Activated CD4-positive, alpha-beta memory T cell treated with anti-CD3 and anti-CD28 coated beads for 36 hours (primary cell): ENCODE measurements at regions of chr20 and their contacts with region 1.

Region 1: DNA sequence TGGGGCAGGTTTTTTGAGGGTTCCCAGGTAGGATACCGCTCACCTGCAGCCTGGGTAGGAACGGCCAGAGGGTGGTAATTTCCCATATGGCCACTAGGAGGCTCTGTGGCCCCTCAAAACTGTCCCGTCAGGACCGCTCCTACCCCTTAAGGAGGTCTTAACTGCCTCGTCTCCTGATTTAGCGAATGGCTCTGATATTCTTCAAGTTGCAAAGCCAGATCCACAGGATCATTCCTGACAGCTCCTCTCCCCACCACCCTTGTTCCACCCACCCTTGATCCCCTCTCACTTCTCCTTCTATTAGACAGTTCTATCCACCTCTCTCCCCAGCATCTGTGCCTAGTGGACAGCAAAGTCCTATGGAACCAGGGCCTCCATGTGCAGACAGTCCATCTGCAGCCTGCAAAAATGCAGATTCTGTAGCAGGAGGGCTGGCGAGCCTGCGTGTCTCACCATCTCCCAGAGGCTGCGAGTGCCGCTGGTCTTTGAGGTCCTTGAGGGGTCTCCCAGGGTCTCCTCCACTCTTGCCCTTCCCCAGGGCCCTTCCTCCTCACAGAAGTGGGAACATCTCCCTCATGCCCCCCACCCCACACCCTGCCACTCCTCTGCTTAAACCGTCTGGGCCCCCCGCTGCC is 34.3 kb upstream of the ZBP1 start:
- DNase-seq: peak; percentile 66
- H3K4me3 Mint-ChIP-seq: no peak overlapping the region
- H3K27ac Mint-ChIP-seq: no peak overlapping the region
- H3K4me1 Mint-ChIP-seq: peaks cover 11% of the 10 kb centered on the region
- H3K27me3 Mint-ChIP-seq: no peaks in the 10 kb centered on the region

Region 2: DNA sequence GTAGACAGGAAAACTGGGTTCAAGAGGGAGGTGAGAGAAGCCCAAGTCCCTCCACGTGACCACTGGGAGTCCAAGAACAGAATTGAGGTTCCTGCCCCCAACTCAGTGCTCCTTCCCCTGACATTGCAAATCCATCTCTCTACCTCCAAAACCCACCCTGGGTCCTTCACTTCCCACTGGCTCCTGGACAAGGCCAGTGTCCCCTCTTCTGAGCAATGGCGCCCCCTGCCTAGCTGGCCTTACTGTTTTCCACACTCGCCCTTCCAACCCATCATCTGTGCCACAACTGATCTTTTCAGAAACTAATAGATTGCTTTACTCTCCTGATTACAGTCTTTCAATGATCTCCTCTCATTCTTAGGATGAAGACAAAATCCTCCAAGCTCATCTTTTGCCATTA is 373.6 kb after region 1 on chr20:
- CTCF ChIA-PET with region 1: no interaction called
- POLR2A ChIA-PET with region 1: no interaction called
- intact Hi-C with region 1: loop called (anchors 5 kb)
- DNase-seq: peak; percentile 24
- H3K4me3 Mint-ChIP-seq: no peak overlapping the region
- H3K27ac Mint-ChIP-seq: no peak overlapping the region
- H3K4me1 Mint-ChIP-seq: no peaks in the 10 kb centered on the region
- H3K27me3 Mint-ChIP-seq: peaks cover 19% of the 10 kb centered on the region

Region 3: DNA sequence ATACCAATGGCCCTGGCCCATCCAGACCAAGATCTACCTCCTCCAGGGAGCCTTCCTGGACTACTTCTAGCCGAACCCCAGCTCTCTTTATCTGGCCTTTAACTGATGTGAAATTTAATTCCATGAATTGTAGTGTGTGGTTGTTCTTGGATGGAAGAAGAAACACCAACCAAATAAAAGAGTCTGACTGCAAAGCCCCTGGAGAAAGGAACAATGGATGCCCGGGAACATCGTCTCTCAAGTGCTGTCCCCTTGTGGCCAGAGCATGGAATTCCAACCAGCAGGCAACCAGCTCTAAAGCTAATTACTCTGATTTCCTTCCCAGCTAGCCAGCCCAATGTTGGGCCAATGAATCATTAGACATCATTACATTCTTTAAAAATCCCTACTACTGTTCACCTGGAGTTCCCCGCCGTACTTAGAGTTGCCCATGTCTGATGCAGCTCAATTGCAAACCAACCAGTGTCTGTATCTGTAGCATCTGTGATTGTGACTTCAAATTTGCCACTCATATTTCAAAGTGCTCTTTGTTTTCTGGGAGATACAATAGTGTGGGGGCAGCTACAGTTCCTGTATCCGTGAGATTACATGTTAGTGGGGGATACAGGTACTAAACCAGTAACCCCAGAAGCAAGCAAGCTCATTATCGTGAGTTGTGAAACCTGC is 432.8 kb after region 1 on chr20:
- CTCF ChIA-PET with region 1: interaction called, 44 read pairs
- POLR2A ChIA-PET with region 1: no interaction called
- intact Hi-C with region 1: loop called (anchors 5 kb)
- DNase-seq: peak; percentile 27
- H3K4me3 Mint-ChIP-seq: no peak overlapping the region
- H3K27ac Mint-ChIP-seq: no peak overlapping the region
- H3K4me1 Mint-ChIP-seq: no peaks in the 10 kb centered on the region
- H3K27me3 Mint-ChIP-seq: peaks cover 9% of the 10 kb centered on the region

Region 4: GRCh38 chr20:58179432-58180099 is 525.1 kb after region 1 on chr20:
- CTCF ChIA-PET with region 1: interaction called, 11 read pairs
- POLR2A ChIA-PET with region 1: no interaction called
- intact Hi-C with region 1: loop called (anchors 1 kb)
- DNase-seq: peak; percentile 70
- H3K4me3 Mint-ChIP-seq: no peak overlapping the region
- H3K27ac Mint-ChIP-seq: no peak overlapping the region
- H3K4me1 Mint-ChIP-seq: peaks cover 3% of the 10 kb centered on the region
- H3K27me3 Mint-ChIP-seq: peaks cover 13% of the 10 kb centered on the region

Region 5: DNA sequence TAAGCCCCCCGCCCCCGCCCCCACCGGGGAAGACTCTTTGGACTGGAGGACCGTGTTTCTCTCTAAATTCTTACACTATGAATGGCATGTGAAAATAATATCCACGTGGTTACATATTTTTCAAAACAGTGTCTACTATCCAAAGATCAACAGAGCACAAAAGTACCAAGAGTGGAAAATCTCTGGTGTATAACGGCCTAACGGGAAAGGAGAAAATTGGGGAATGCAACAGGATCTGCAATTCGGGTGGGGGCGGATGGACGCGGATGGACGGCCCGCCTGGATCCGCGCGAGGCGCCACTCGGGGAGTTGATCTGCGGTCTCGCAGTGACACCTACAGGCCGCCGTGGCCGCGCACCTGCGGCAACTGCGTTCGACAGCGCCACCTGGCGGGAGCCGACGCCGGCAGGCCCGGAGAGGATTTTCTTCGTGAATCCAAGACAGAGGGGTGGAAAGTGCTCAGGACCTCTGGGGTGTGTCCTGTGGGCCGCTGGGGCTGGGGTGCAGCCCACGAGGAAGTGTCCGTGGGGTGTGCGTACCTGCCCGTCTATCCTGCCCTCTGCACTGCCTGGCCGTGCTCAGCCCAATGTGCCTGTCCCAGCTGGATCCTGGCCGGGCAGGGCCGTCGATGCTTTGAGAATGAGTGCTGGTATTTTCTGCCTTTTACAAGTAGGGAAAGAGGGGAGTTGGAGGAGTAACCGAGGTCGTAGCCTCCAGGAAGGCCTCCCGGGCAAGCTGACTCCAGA is 555.3 kb after region 1 on chr20:
- CTCF ChIA-PET with region 1: interaction called, 4 read pairs
- POLR2A ChIA-PET with region 1: no interaction called
- intact Hi-C with region 1: loop called (anchors 10 kb)
- DNase-seq: peak; percentile 89
- H3K4me3 Mint-ChIP-seq: no peak overlapping the region
- H3K27ac Mint-ChIP-seq: no peak overlapping the region
- H3K4me1 Mint-ChIP-seq: no peaks in the 10 kb centered on the region
- H3K27me3 Mint-ChIP-seq: peaks cover 3% of the 10 kb centered on the region